Colonic mucosa (tissue), 4 donors: ENCODE measurements at regions of chr15 and their contacts with region 1.

Region 1: DNA sequence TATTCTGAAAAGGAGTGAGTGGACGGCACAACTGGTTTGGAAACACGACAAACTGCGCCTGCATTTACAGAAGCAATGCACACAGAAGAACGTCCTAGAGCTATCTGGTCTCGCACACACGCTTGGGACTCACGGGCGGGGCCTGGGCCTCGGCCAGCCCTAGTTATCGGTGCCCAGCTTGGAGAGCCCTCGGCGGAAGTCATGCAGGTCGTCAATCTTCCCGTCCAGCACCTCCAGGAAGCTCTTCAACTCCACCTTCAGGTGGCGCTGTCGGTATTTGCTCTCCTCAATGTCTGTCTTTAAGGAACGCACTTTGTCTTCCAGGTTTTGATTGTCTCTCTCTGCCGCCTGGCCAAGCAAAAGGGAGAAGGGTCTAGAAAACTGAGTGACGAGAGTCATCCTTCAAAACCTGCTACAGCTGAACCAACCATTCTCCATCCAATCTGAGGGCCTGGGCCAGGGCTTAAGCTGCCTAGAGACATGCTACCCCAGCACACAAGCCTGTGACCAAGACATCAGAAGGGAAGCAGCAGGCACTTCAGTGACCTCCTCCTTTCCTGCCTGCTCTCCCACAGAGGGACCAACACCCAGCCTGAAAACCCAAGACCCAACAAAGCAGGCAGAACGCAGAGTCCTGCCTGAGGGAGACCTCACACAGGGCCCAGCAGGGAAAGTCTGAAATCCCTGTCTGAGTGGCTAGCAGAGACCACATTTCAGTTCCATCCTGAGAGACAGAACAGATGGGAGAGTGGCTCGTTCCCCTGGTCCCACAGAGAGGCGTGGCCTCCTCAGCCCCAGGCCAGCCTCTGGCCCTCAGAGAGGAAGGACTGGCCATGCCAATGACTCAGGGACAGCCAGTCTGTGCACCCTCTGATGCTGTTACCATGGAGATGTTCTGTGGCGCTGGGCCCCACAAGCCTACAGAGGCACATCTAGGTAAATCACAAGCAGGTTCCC is 40.4 kb downstream of the WHAMM start:
- DNase-seq: peak; percentile 79
- H3K4me3 ChIP-seq: no peak overlapping the region
- H3K27ac ChIP-seq: no peak overlapping the region
- H3K4me1 ChIP-seq: no peaks in the 10 kb centered on the region
- H3K27me3 ChIP-seq: no peaks in the 10 kb centered on the region
- CTCF ChIP-seq: peak; percentile 50

Region 2: DNA sequence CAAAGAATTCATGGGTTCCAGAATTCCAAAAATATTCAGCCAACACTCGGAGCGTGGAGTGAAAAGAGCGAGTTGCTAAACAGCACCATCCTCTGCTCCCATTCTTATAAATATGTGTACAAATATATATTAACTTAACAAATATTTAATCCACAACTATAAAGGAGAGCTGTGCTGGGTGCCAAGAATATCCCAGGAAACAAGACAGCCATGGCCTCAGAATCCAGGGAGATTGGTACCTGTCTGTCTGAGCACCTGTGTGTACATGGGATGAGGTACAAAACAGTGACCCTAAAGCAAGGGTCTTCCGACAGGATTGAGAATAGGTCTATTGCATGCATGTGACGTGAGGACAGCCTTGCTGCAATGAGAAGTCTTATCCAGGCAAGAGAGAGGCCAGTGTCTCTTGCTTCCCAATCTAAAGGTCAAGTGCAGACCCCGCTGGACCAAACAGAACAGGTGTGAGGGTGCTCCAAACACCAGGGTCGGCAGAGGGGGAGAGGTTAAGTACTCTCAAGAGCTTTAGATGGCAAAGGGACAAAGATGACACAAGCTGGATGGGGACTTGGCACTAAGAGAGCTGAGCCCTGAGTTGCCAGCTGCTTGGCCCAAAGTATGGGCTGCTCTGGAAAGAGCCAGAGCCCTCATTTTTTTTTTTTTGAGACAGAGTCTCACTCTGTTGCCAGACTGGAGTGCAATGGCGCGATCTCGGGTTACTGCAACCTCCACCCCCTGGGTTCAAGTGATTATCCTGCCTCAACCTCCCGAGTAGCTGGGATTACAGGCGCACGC is 66.5 kb after region 1 on chr15:
- intact Hi-C with region 1: no loop called
- DNase-seq: no peak
- H3K4me3 ChIP-seq: no peak overlapping the region
- H3K27ac ChIP-seq: no peak overlapping the region
- H3K4me1 ChIP-seq: no peaks in the 10 kb centered on the region
- H3K27me3 ChIP-seq: no peaks in the 10 kb centered on the region
- CTCF ChIP-seq: no peak

Region 3: DNA sequence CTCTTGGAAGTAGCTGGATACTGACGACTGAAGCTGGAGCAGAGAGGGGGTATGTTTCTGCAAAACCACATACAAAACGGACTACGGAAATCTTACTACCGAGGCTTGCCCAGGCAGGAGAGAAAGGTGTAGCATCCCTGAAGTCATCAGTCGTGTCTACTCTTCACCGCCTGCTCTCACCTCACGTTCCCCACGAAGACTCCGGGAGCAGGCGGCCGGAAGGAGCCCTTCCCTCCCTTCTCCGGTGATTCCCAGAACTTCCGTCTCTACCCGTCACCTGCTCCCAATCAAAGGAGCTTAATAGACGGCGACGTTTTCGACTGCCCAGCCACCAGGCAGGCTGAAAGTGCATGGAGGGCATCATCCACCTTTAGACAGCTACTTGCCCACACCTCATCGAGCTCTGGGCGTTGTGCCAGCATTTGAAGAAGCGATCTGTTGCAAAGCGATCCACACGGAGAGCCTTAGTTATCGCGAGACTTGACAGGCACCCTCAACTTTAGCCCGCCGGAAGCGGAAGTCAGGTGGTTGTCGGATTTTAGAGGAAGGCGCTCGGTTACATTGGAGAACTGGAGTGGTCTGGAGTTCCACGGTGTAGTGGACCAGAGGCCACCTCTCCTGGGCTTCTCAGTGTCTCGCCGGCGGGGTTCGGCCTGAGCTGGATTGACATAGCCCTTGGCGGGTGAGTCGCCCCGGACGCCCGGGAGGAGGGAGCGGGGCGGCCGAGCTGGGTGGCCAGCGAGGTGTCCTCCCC is 136.0 kb after region 1 on chr15 and contains the start of gene RAMAC:
- intact Hi-C with region 1: no loop called
- DNase-seq: peak; percentile 96
- H3K4me3 ChIP-seq: peak within 1 kb of the TSS; percentile 62
- H3K27ac ChIP-seq: peak within 1 kb of the TSS; percentile 18
- H3K4me1 ChIP-seq: peaks cover 4% of the 10 kb centered on the region
- H3K27me3 ChIP-seq: no peaks in the 10 kb centered on the region
- CTCF ChIP-seq: no peak
- total RNA-seq, gene RAMAC: 22.8 to 23.0 TPM

Region 4: DNA sequence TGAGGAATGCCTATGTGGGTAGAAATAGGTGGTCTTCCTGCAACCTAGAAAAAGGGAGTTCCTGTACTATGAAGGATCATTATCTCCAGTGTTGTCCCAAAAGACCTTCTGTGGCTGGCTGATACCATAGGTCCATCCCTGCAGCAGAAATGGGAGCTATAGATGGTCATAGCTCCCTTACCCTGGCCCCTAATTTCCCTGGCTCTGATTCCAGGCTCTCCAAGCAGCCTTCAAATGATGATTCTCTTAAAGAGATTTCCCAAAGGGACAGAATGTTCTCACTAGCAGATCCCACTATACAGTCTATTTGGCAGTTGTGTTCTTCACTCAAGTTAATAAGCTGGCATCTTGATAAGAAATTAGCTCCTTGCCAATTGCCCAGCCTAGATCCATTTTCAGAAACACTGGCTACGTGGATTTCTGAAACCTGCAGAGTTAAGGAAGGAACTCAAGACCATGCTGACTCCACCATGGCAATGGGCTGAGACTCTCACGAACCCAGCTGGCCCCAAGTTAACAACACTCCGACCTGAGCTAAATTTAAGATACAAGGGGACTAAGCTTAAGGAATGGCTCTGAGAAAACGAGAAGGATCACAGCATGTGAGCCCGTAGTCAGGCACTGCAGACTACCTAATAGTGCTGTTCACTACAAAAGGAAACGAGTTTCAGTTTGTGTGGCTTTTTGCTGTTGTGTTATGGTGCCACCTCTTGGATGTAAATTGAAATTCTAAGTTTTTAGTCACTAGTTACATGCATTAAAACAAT is 150.3 kb after region 1 on chr15:
- intact Hi-C with region 1: loop called (anchors 2 kb)
- DNase-seq: no peak
- H3K4me3 ChIP-seq: no peak overlapping the region
- H3K27ac ChIP-seq: no peak overlapping the region
- H3K4me1 ChIP-seq: no peaks in the 10 kb centered on the region
- H3K27me3 ChIP-seq: no peaks in the 10 kb centered on the region
- CTCF ChIP-seq: peak; percentile 29